MCF 10A (cell line): ENCODE measurements at regions of chr1 and their contacts with region 1.

Region 1: GRCh38 chr1:209368864-209369598 is 214.5 kb upstream of the CAMK1G start:
- DNase-seq: peak; percentile 100
- H3K4me3 Mint-ChIP-seq: peak overlapping the region; percentile 40
- H3K27ac Mint-ChIP-seq: peak overlapping the region; percentile 86
- H3K4me1 Mint-ChIP-seq: peaks cover 90% of the 10 kb centered on the region
- H3K27me3 Mint-ChIP-seq: no peaks in the 10 kb centered on the region
- CTCF ChIP-seq: no peak

Region 2: DNA sequence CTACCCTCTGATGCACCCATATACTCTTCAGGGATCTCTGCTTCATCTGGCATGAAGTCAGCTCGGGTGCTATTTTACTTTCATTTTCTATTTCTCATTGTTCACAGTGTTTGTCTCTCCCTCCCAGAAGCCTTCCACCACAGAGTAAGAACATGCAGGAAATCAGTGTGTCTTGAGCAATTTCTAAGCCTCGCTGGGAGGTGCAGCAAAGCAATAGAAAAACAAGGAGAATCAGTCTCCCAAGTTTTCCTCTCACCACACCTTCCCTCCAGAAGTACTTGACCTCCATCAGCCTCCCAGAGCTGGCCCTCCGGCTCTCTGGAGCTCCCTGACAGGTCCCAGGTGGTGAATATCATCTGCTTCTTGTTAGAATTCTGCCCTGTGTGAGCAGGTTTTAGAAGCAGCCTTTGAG is 380.2 kb before region 1 on chr1:
- CTCF ChIA-PET with region 1: no interaction called
- POLR2A ChIA-PET with region 1: no interaction called
- intact Hi-C with region 1: loop called (anchors 5 kb)
- DNase-seq: peak; percentile 90
- H3K4me3 Mint-ChIP-seq: peak overlapping the region; percentile 57
- H3K27ac Mint-ChIP-seq: peak overlapping the region; percentile 62
- H3K4me1 Mint-ChIP-seq: peaks cover 39% of the 10 kb centered on the region
- H3K27me3 Mint-ChIP-seq: no peaks in the 10 kb centered on the region
- CTCF ChIP-seq: no peak

Region 3: DNA sequence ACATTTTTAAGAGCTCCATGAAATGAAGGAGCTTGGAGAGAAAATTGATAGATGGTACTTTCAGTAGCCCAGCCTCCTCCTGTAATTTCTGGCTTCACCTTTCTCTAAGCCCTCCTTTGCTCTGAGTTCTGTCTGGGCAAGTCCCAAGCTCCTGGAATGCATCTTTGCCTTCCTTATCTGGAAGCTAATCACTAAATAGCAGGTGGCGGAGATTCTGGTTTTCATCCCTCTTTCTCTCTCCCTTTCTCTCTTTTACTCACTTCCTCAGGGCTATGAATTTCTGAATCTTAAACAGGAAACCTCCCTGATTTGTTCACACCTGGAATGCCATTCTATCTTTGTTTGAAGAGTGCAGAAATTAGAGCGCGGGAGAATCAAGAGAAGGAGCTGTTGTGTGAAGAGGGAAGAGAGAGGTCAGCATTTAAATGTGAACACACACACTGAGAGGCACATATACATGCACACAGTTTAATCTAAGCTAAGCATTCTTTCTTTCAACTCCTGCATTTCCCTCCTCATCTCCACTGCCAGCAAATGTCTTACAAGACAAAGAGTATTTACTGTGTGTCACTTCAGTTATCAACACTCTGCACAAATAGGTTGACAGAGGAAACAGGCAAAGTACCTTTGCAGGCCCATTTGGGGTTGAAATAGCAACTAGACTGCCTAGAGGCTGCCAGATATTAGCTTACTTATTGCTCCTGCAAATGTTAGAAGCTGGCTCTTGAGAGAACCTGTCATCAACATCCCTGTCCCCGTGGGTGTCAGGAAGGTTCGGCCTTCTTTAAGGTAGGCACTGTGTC is 15.1 kb after region 1 on chr1:
- CTCF ChIA-PET with region 1: interaction called, 714 read pairs
- POLR2A ChIA-PET with region 1: interaction called, 2,201 read pairs
- intact Hi-C with region 1: loop called (anchors 1 kb)
- DNase-seq: peak; percentile 72
- H3K4me3 Mint-ChIP-seq: peak overlapping the region; percentile 15
- H3K27ac Mint-ChIP-seq: peak overlapping the region; percentile 81
- H3K4me1 Mint-ChIP-seq: peaks cover 65% of the 10 kb centered on the region
- H3K27me3 Mint-ChIP-seq: no peaks in the 10 kb centered on the region
- CTCF ChIP-seq: no peak

Region 4: GRCh38 chr1:209389258-209389657 is 20.2 kb after region 1 on chr1:
- CTCF ChIA-PET with region 1: interaction called, 714 read pairs
- POLR2A ChIA-PET with region 1: interaction called, 2,201 read pairs
- intact Hi-C with region 1: loop called (anchors 1 kb)
- DNase-seq: peak; percentile 99
- H3K4me3 Mint-ChIP-seq: peak overlapping the region; percentile 22
- H3K27ac Mint-ChIP-seq: peak overlapping the region; percentile 79
- H3K4me1 Mint-ChIP-seq: peaks cover 45% of the 10 kb centered on the region
- H3K27me3 Mint-ChIP-seq: no peaks in the 10 kb centered on the region
- CTCF ChIP-seq: no peak

Region 5: GRCh38 chr1:209398313-209398991 is 29.4 kb after region 1 on chr1:
- CTCF ChIA-PET with region 1: interaction called, 25 read pairs
- POLR2A ChIA-PET with region 1: interaction called, 6,956 read pairs
- intact Hi-C with region 1: loop called (anchors 1 kb)
- DNase-seq: peak; percentile 100
- H3K4me3 Mint-ChIP-seq: peak overlapping the region; percentile 29
- H3K27ac Mint-ChIP-seq: peak overlapping the region; percentile 79
- H3K4me1 Mint-ChIP-seq: peaks cover 28% of the 10 kb centered on the region
- H3K27me3 Mint-ChIP-seq: no peaks in the 10 kb centered on the region
- CTCF ChIP-seq: no peak

Region 6: DNA sequence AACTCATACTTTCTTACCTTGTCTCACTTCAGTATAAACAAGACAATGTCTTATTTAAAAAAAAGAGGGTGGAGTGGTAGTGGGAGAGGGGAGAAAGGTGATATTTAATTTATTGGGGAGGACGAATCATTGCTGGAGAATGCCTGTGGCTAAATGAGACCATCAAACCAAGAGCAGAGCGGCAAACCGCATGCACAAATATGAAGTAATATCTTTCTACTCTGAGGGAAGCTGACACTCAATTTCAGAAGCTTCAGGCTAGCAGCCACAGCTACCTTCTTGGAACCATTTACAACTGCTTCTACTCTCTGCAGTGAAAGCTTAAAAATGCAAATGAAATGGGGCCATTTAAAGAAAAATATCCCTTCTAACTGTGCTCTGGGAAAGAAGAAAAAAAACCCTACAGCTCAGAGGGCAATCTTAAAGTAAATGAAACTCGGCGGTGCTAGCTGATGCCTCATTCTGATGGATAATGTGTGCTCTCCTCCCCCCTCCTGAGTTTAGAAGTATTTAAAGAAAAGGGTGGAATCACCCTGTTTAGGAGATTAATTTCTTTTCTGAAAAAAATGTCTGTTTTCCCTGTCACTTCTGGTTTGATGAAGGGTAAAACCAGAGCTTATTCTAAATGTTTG is 36.3 kb after region 1 on chr1:
- CTCF ChIA-PET with region 1: interaction called, 25 read pairs
- POLR2A ChIA-PET with region 1: interaction called, 6,956 read pairs
- intact Hi-C with region 1: no loop called
- DNase-seq: peak; percentile 81
- H3K4me3 Mint-ChIP-seq: peak overlapping the region; percentile 17
- H3K27ac Mint-ChIP-seq: no peak overlapping the region
- H3K4me1 Mint-ChIP-seq: peaks cover 16% of the 10 kb centered on the region
- H3K27me3 Mint-ChIP-seq: no peaks in the 10 kb centered on the region
- CTCF ChIP-seq: no peak